ENCODE measurements at regions of chr10 and their contacts with region 1.

Region 1: DNA sequence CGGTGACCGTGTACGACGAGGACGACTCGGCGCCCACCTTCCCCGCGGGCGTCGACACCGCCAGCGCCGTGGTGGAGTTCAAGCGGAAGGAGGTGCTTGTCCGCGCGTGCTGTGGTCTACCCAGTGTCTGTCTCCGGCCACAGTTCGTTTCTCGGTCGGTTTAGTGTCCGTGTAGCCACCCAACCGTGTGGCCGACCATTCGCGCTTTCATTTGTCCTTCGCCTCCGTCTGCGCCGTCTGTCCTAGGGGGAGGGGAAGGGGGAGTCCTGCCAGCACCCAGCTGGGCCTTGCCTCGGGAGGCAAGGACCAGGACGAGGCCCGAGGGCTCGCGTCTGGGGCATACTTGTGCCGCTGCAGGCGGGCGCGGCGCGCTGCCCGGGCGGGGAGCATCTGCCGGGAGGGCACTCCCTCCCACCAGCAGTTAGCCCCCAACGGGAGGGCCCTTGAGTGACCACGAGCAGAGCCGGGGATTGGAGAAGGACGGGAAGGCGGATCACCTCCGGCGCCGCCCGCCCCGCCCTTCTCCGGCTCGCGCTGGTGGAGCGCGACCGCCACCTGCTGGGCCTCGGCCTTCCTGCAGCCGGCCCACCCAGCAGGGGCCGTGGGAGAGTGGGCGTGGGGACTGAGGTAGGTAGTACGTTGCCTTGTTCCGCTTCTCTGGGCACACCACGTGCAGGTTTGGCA is 28.4 kb downstream of the RET start:
- DNase-seq: no peak
- H3K4me3 ChIP-seq: peak overlapping the region; percentile 54 to 68 (median 58)
- H3K27ac ChIP-seq: peak overlapping the region in 1 of 4 donors; percentile 19
- H3K4me1 ChIP-seq: peaks cover 16 to 18% (median 18%) of the 10 kb centered on the region in 4 donors
- H3K27me3 ChIP-seq: peaks cover 0 to 30% (median 0%) of the 10 kb centered on the region in 4 donors
- CTCF ChIP-seq: peak; percentile 96 to 100 (median 98)
- EP300 ChIP-seq: no peak
- POLR2A ChIP-seq: no peak

Region 2: GRCh38 chr10:42638055-42638820 is 467.0 kb before region 1 on chr10 and contains the start of gene ZNF33B:
- intact Hi-C with region 1: loop called (anchors 10 kb)
- DNase-seq: peak; percentile 96
- H3K4me3 ChIP-seq: peak within 1 kb of the TSS; percentile 75 to 98 (median 80)
- H3K27ac ChIP-seq: peak within 1 kb of the TSS; percentile 91 to 96 (median 94)
- H3K4me1 ChIP-seq: peaks cover 0 to 20% (median 10%) of the 10 kb centered on the region in 4 donors
- H3K27me3 ChIP-seq: no peaks in the 10 kb centered on the region
- CTCF ChIP-seq: no peak
- EP300 ChIP-seq: no peak
- POLR2A ChIP-seq: no peak
- total RNA-seq, gene ZNF33B: 10.8 to 18.4 (median 15.9) TPM

Region 3: GRCh38 chr10:42753126-42753506 is 352.1 kb before region 1 on chr10:
- intact Hi-C with region 1: loop called (anchors 1 kb)
- DNase-seq: no peak
- H3K4me3 ChIP-seq: peak overlapping the region; percentile 53 to 70 (median 56)
- H3K27ac ChIP-seq: peak overlapping the region in 3 of 4 donors; percentile 45 to 57 (median 54)
- H3K4me1 ChIP-seq: peaks cover 14 to 36% (median 31%) of the 10 kb centered on the region in 4 donors
- H3K27me3 ChIP-seq: peaks cover 0 to 69% (median 26%) of the 10 kb centered on the region in 4 donors
- CTCF ChIP-seq: peak; percentile 81 to 93 (median 89)
- EP300 ChIP-seq: no peak
- POLR2A ChIP-seq: no peak

Region 4: DNA sequence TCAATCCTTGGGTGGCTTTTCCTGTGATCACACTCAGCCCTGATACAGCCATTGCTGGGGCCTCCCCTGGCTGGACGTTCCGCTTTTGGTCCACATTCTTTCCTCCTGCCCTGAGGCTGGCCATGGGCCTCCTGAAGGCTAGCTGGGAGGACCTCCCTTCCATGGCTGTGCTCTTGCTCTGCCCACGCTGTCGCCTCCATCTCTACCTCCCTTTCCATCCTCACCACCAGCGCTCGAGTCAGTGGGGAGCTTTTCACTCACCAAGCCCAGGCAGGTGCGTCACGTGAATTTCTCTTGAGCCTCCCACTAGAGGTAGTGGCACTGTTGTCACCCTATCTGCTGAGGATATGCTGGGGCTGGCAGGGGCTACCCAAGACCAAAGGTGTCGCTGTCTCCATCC is 236.7 kb before region 1 on chr10:
- intact Hi-C with region 1: loop called (anchors 2 kb)
- DNase-seq: peak; percentile 80
- H3K4me3 ChIP-seq: no peak overlapping the region
- H3K27ac ChIP-seq: no peak overlapping the region
- H3K4me1 ChIP-seq: peaks cover 13 to 20% (median 15%) of the 10 kb centered on the region in 4 donors
- H3K27me3 ChIP-seq: peaks cover 0 to 30% (median 5%) of the 10 kb centered on the region in 4 donors
- CTCF ChIP-seq: no peak
- EP300 ChIP-seq: no peak
- POLR2A ChIP-seq: no peak

Region 5: GRCh38 chr10:43039624-43040481 is 65.4 kb before region 1 on chr10:
- intact Hi-C with region 1: no loop called
- DNase-seq: peak; percentile 72
- H3K4me3 ChIP-seq: no peak overlapping the region
- H3K27ac ChIP-seq: no peak overlapping the region
- H3K4me1 ChIP-seq: no peaks in the 10 kb centered on the region
- H3K27me3 ChIP-seq: no peaks in the 10 kb centered on the region
- CTCF ChIP-seq: no peak
- EP300 ChIP-seq: no peak
- POLR2A ChIP-seq: no peak

Measured in esophagus muscularis mucosa (tissue), 4 donors.